AG04449 (cell line): ENCODE measurements at regions of chr19 and their contacts with region 1.

Region 1: DNA sequence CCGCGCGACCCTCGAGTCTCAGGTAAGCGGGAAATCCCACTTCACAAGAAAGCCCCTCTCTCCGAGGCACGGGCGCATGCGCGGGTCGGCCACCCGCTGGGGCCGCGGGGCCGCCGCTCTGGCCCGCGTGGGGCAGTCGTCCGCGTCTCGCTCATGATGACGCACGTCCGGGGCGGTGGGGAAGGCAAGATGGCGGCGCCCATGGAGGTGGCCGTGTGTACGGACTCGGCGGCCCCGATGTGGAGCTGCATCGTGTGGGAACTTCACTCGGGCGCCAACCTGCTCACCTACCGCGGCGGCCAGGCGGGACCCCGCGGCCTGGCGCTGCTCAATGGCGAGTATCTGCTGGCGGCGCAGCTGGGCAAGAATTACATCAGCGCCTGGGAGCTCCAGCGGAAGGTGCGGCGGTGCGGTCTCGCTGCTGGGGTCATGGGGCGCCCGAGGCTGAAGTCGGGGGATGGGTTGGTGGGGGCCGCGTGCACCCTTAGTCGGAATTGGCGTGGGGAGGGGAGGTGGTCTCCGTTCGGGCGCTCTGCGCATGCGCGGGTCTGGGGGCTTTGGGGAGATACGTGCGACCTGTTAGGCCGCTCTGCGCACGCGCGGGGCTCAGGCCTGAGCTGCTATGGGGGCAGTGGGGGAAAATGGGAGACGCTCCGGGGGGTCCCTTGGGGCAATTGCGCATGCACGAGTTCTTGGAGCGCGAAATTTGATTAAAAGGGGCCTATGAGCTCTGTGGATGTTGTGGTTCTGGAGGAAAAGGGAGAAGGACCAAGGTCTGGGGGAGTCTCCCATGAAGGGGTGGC is at the start of gene WDR18:
- DNase-seq: peak; percentile 14
- H3K4me3 ChIP-seq: peak within 1 kb of the TSS; percentile 93
- CTCF ChIP-seq: no peak

Region 2: DNA sequence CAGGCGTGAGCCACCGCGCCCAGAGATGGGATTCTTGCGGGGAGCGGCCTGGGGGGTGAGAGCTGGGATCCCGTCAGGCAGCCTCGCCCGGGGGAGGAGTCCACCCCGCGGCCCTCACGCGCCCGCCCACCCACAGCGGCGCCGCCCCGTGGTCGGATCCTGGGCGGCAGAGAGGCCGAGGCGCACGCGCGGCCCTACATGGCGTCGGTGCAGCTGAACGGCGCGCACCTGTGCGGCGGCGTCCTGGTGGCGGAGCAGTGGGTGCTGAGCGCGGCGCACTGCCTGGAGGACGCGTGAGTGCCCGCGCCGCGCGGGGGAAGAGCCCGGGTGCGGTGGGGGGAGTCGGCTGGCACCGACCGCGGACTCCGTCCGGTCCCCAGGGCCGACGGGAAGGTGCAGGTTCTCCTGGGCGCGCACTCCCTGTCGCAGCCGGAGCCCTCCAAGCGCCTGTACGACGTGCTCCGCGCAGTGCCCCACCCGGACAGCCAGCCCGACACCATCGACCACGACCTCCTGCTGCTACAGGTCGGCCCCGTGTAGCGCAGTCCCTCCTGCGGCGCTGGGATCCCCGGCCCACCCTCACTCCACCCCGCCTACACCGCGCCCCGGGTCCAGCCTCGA is 123.8 kb before region 1 on chr19:
- CTCF ChIA-PET with region 1: interaction called, 12 read pairs
- POLR2A ChIA-PET with region 1: no interaction called
- DNase-seq: no peak
- H3K4me3 ChIP-seq: peak overlapping the region; percentile 47
- CTCF ChIP-seq: peak; percentile 37

Region 3: DNA sequence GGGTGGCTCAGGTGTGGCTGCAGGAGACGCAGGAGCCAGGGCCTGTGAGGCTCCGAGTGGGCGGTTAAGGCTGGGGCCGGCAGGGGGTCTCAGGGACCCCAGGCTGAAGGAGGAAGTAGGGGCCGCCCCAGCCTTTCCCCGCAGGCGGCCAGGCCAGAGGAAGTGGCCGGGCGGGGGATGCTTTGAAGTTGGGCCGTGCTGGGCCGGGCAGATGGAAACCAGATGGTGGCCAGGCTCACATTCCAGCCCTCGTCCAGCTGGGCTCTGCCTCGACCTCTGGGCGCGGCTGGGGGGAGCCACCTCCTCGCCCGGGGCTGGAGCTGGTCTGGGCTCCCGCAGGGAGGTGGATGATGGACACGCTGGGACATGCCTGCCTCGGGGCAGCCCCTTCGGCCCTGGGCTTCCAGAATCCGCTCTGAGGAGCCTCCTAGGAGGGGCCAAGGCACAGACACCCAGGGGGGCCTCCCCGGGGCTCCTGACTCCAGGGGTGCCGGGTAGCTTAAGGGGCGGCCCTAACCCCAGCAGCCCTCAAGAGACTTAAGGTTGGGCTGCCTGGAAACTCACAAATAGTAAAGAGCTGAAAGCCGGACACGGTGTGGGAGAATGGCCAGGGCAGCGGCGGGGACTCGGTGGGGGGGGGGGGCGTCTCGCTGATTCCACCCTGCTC is 51.0 kb before region 1 on chr19:
- CTCF ChIA-PET with region 1: interaction called, 12 read pairs
- POLR2A ChIA-PET with region 1: no interaction called
- DNase-seq: peak; percentile 26
- H3K4me3 ChIP-seq: peak overlapping the region; percentile 32
- CTCF ChIP-seq: no peak

Region 4: DNA sequence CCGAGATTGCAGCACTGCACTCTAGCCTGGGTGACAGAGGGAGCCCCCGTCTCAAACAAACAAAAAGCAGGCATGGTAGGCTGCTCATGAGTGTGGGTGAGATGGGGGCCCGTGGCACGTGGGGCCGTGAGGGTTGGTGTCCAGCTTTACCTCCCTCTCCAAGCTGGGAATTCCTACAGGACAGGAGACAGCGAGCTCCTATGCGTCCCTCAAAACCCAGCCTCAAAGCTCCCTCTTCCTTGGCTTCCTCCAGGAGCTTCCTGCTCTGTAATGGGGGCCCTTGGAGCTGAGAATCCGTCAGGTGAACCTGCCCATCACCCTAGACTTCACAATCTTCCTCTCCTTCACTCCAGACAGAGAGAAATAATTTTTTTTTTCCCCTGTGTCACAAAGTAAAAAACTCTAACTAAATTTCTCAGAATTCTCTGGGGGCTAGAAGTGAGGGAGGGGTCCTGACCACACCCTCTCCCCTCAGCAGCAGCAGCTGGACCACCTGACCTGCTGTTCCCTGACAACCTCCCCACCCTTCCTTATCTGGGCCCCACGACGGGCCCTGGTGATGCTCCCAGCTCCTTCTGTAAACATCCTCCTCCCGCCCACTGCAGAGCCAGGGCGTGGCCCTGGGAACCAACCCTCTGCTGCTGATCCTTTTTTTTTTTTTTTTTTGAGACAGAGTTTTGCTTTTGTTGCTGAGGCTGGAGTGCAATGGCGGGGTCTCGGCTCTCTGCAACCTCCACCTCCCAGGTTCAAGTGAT is 22.3 kb before region 1 on chr19:
- CTCF ChIA-PET with region 1: interaction called, 37 read pairs
- POLR2A ChIA-PET with region 1: interaction called, 3 read pairs
- DNase-seq: no peak
- H3K4me3 ChIP-seq: no peak overlapping the region
- CTCF ChIP-seq: no peak

Region 5: GRCh38 chr19:970695-971094 is 13.7 kb before region 1 on chr19:
- CTCF ChIA-PET with region 1: interaction called, 42 read pairs
- POLR2A ChIA-PET with region 1: no interaction called
- DNase-seq: no peak
- H3K4me3 ChIP-seq: no peak overlapping the region
- CTCF ChIP-seq: peak; percentile 55

Region 6: GRCh38 chr19:1094975-1095701 is 110.8 kb after region 1 on chr19 and contains the start of gene POLR2E:
- CTCF ChIA-PET with region 1: no interaction called
- POLR2A ChIA-PET with region 1: no interaction called
- DNase-seq: peak; percentile 76
- H3K4me3 ChIP-seq: peak within 1 kb of the TSS; percentile 92
- CTCF ChIP-seq: no peak